ENCODE measurements at regions of chr13 and their contacts with region 1.

Region 1: GRCh38 chr13:44710576-44710975 is 134.4 kb upstream of the TSC22D1 start:
- DNase-seq: no peak
- H3K4me3 ChIP-seq: no peak overlapping the region
- H3K27ac ChIP-seq: peak overlapping the region; percentile 74 to 88
- H3K4me1 ChIP-seq: peaks cover 0 to 50% of the 10 kb centered on the region in 2 donors
- H3K27me3 ChIP-seq: no peaks in the 10 kb centered on the region
- CTCF ChIP-seq: no peak

Region 2: DNA sequence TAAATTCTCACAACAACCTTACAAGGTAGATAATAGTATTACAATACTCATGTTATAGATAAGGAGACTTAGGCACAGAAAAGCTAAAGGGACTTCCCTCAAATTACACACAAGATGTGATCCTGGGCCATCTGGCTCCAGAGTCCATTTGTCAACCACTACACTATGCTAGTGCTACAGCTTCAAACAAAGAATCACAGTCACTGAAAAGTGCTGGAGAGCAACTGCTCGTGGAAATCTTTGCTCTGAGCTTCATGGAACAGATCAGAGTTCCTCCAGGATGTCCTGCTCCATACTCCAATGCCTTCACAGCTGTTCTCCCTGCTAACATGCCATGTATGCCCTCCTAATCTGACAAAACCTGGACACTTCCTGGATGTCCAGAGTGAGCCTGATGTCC is 1195.0 kb before region 1 on chr13:
- intact Hi-C with region 1: no loop called
- DNase-seq: no peak
- H3K4me3 ChIP-seq: no peak overlapping the region
- H3K27ac ChIP-seq: peak overlapping the region in 1 of 2 donors; percentile 47
- H3K4me1 ChIP-seq: peaks cover 3 to 7% of the 10 kb centered on the region in 2 donors
- H3K27me3 ChIP-seq: no peaks in the 10 kb centered on the region
- CTCF ChIP-seq: no peak

Region 3: GRCh38 chr13:44565881-44566280 is 144.7 kb before region 1 on chr13:
- intact Hi-C with region 1: no loop called
- DNase-seq: no peak
- H3K4me3 ChIP-seq: no peak overlapping the region
- H3K27ac ChIP-seq: no peak overlapping the region
- H3K4me1 ChIP-seq: peaks cover 0 to 5% of the 10 kb centered on the region in 2 donors
- H3K27me3 ChIP-seq: no peaks in the 10 kb centered on the region
- CTCF ChIP-seq: no peak

Region 4: GRCh38 chr13:44667943-44668342 is 42.6 kb before region 1 on chr13:
- intact Hi-C with region 1: loop called (anchors 5 kb)
- DNase-seq: no peak
- H3K4me3 ChIP-seq: peak overlapping the region in 1 of 2 donors; percentile 37
- H3K27ac ChIP-seq: peak overlapping the region; percentile 6 to 60
- H3K4me1 ChIP-seq: peaks cover 0 to 12% of the 10 kb centered on the region in 2 donors
- H3K27me3 ChIP-seq: no peaks in the 10 kb centered on the region
- CTCF ChIP-seq: no peak